BJ (cell line): ENCODE measurements at regions of chr2 and their contacts with region 1.

Region 1: GRCh38 chr2:42086500-42086953 is 38.7 kb downstream of the PKDCC start:
- DNase-seq: no peak
- H3K4me3 ChIP-seq: no peak overlapping the region
- H3K27me3 ChIP-seq: peaks cover 2% of the 10 kb centered on the region; the same call in 1 of the 2 replicates
- CTCF ChIP-seq: peak; percentile 70

Region 2: GRCh38 chr2:41840702-41841551 is 245.6 kb before region 1 on chr2:
- CTCF ChIA-PET with region 1: interaction called, 28 read pairs
- POLR2A ChIA-PET with region 1: no interaction called
- DNase-seq: peak; percentile 84
- H3K4me3 ChIP-seq: peak overlapping the region; percentile 65
- H3K27me3 ChIP-seq: peaks cover 1% of the 10 kb centered on the region; the same call in 1 of the 2 replicates
- CTCF ChIP-seq: peak; percentile 99

Region 3: DNA sequence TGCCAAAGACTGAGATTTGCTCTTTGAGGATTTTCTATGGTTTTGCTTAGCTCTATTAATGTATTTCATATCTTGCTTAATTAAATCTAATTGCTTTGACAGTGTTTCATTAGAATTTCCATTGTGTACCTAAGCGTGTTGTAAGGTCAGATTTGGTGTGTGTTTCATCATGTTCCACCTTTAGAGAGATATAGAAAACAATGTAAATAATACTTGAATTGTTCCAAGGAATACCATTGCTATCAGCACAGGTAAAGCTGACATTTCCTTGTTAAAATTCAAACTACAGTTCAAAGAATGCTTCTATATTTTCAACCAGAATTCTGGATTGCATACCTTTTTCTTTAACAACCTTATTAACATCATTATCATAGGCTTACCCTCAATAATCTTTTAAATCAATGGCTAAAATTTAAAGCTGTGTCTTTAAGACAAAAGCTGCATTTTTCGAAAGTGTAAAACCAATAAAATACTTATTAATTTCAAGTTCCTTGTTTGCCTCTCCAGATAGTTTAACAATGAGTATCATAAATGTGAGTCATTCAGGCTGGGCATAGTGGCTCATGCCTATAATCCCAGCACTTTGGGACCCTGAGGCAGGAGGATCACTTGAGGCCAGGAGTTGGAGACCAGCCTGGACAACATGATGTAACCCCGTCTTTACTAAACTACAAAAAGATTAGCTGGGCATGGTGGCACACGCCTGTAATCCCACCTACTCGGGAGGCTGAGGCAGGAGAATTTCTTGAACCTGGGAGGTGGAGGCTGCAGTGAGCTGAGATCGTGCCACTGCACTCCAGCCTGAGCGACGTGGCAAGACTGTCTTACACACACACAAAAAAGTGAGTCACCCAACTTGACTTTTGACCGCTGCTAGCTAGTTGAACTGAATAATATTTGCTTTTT is 226.7 kb before region 1 on chr2:
- CTCF ChIA-PET with region 1: interaction called, 422 read pairs
- POLR2A ChIA-PET with region 1: no interaction called
- DNase-seq: no peak
- H3K4me3 ChIP-seq: no peak overlapping the region
- H3K27me3 ChIP-seq: no peaks in the 10 kb centered on the region
- CTCF ChIP-seq: no peak

Region 4: DNA sequence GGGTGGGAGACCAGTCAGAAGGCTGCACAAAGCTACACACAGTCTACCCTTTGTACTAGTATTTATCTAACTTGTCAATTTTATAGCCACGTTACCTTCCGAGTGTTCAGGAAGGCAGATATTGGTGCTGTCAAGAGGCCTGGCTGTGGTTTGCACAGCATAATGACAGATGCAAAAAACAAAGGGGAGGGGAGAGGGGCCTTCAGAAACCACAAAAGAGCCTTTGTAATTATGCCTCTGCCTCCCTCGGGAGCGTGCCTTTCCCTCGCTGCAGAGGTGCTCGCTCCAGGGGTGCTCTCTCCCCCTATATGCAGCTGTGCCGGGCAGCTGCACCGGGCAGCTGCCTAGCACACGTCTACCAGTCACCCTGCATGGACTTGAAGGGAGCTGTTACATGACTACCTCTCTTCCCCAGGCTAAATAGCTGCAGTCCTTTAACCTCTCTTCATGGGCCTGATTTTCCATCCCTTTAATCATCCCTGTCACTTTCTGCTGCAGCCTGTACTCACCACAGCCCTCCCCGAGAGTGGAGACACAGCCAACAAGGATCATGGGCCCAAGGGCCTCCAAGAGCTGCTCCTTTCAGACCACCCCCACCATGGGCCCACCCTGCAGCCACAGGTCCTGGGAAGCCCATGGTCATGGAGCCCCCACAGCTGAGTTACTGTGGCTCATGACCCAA is 207.2 kb before region 1 on chr2:
- CTCF ChIA-PET with region 1: interaction called, 422 read pairs
- POLR2A ChIA-PET with region 1: no interaction called
- DNase-seq: no peak
- H3K4me3 ChIP-seq: no peak overlapping the region
- H3K27me3 ChIP-seq: peaks cover 2% of the 10 kb centered on the region; the same call in 1 of the 2 replicates
- CTCF ChIP-seq: no peak

Region 5: DNA sequence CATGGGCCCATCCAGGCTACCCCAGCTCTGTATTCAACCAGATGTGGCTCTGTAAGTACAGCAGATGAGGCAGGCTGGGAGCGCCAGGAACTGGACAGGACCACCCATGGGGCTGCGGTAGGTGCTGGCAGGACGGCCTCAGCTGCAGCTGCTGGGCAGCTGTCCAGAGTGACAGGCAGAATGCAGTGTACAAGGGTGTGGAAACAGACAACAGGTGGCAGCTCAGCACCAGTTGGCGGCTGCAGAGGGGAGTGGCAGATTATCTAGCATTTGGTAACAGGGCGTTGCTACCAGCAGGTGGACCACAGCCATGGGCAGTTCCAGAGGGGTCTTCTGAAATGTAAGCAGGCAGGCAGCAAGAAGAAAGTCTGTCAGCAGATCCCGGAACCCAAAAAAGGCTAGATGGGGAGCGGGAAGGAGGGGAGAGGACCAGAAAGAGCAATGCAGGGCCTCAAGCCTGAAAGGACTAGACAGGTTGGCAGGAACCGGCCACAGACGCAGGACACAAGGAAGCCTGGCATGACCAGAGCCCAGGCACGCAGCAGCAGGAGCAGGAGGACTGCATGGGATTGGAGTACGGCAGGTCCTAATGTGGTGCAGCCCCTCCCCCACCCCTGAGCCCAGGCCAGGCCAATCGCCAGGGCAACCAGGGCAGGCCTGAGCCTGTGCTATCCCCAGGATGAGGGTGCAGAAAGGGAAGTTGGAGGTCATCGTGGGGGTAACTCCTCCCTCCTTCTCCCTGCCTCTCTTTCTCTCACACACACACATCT is 14.0 kb before region 1 on chr2:
- CTCF ChIA-PET with region 1: interaction called, 25 read pairs
- POLR2A ChIA-PET with region 1: no interaction called
- DNase-seq: no peak
- H3K4me3 ChIP-seq: no peak overlapping the region
- H3K27me3 ChIP-seq: peaks cover 29% of the 10 kb centered on the region
- CTCF ChIP-seq: no peak

Region 6: DNA sequence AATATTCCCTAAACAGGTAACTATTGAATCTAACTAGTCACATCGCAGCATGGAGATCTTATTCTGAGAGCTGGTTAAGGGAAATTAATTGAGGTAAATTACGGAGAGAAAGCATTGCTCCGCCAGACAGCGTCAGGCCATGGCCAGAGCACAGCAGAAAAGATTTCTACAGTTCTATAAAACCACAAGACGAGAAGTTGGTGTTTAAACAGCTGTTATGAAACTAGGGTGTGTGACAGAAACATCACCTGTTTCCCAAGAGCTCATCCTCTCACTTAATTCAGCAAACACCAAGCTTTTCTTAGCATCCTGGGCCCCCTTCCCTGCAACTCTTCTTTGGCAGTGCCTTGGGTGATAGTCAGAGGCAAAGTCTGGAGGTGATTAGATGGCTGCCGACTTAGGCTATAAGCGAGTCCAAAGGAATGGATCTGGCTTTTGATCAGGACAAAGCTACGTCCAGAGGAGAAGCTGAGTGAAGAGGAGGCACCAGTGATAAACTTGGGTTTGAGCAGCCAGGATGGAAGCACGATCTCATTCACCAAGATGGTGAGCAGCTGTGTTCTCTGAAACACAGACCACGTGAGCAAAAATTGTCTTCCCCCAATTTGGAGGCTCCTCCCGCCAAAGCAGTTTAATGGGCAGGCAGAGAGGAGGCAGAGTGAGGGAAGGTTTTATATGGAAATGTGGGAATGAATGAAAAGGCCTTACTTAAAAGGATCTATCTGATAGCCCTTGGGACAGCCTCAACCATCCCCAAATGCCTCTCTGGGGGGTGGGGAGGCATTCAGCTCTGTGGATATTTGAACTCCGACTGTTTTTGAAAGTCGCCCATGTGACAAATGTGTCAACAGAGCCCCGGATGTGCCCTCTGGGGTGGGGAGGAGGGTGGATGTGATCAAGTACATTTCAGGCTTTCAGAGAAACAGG is 19.1 kb after region 1 on chr2:
- CTCF ChIA-PET with region 1: no interaction called
- POLR2A ChIA-PET with region 1: no interaction called
- DNase-seq: no peak
- H3K4me3 ChIP-seq: no peak overlapping the region
- H3K27me3 ChIP-seq: no peaks in the 10 kb centered on the region
- CTCF ChIP-seq: no peak

Region 7: GRCh38 chr2:42360890-42361727 is 274.6 kb after region 1 on chr2 and contains the start of gene COX7A2L:
- CTCF ChIA-PET with region 1: interaction called, 10 read pairs
- POLR2A ChIA-PET with region 1: no interaction called
- DNase-seq: peak; percentile 78
- H3K4me3 ChIP-seq: peak within 1 kb of the TSS; percentile 96
- H3K27me3 ChIP-seq: no peaks in the 10 kb centered on the region
- CTCF ChIP-seq: peak; percentile 45
- polyA plus RNA-seq, gene COX7A2L: 153 and 200 TPM in 2 replicates